ENCODE measurements at regions of chr1 and their contacts with region 1.

Region 1: GRCh38 chr1:112390775-112391602 is 5.0 kb upstream of the CTTNBP2NL start:
- DNase-seq: peak; percentile 89
- H3K4me3 ChIP-seq: peak overlapping the region; percentile 54
- H3K27ac ChIP-seq: no peak overlapping the region
- H3K4me1 ChIP-seq: peaks cover 24% of the 10 kb centered on the region
- CTCF ChIP-seq: peak; percentile 95

Region 2: DNA sequence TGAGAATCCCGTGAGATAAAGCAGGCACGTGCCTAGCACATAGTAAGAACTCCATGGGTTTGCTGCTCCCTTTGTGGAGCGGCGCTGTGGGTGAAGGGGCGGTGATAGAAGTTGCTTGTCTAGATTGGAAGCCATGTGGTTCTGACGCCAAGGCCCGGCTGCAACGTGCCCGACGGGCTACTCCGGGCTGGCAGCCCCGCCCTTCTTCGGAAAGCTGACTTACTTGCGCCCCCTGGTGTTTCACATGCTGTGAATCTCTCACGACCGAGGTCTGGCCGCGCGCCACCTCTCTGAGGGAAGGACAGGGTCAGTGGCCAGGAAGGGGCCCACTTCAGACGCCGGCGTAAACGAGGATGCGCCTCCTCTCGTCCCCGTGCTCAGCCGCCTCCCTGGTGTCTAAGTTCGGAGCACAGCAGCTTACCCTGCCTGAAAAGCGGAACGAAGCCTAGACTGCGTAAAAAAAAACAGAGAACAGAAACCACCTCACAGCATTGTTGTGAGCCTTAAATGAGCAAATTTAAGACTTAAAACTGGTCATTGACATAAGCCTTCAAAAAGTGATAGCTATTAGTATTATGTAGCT is 75.2 kb after region 1 on chr1:
- CTCF ChIA-PET with region 1: interaction called, 6 read pairs
- POLR2A ChIA-PET with region 1: interaction called, 10 read pairs
- intact Hi-C with region 1: loop called (anchors 1 kb)
- DNase-seq: peak; percentile 92
- H3K4me3 ChIP-seq: peak overlapping the region; percentile 41
- H3K27ac ChIP-seq: peak overlapping the region; percentile 64
- H3K4me1 ChIP-seq: peaks cover 43% of the 10 kb centered on the region
- CTCF ChIP-seq: peak; percentile 89

Region 3: GRCh38 chr1:112614460-112615065 is 223.6 kb after region 1 on chr1:
- CTCF ChIA-PET with region 1: no interaction called
- POLR2A ChIA-PET with region 1: interaction called, 11 read pairs
- intact Hi-C with region 1: loop called (anchors 1 kb)
- DNase-seq: peak; percentile 54
- H3K4me3 ChIP-seq: no peak overlapping the region
- H3K27ac ChIP-seq: no peak overlapping the region
- H3K4me1 ChIP-seq: peaks cover 12% of the 10 kb centered on the region
- CTCF ChIP-seq: peak; percentile 84

Region 4: GRCh38 chr1:112706908-112707663 is 316.1 kb after region 1 on chr1 and contains the start of gene RHOC:
- CTCF ChIA-PET with region 1: interaction called, 7 read pairs
- POLR2A ChIA-PET with region 1: interaction called, 4 read pairs
- intact Hi-C with region 1: loop called (anchors 2 kb)
- DNase-seq: peak; percentile 79
- H3K4me3 ChIP-seq: peak within 1 kb of the TSS; percentile 66
- H3K27ac ChIP-seq: no peak within 1 kb of the TSS
- H3K4me1 ChIP-seq: peaks cover 33% of the 10 kb centered on the region
- CTCF ChIP-seq: peak; percentile 86
- total RNA-seq, gene RHOC: 23.1 and 34.9 TPM in 2 replicates

Region 5: DNA sequence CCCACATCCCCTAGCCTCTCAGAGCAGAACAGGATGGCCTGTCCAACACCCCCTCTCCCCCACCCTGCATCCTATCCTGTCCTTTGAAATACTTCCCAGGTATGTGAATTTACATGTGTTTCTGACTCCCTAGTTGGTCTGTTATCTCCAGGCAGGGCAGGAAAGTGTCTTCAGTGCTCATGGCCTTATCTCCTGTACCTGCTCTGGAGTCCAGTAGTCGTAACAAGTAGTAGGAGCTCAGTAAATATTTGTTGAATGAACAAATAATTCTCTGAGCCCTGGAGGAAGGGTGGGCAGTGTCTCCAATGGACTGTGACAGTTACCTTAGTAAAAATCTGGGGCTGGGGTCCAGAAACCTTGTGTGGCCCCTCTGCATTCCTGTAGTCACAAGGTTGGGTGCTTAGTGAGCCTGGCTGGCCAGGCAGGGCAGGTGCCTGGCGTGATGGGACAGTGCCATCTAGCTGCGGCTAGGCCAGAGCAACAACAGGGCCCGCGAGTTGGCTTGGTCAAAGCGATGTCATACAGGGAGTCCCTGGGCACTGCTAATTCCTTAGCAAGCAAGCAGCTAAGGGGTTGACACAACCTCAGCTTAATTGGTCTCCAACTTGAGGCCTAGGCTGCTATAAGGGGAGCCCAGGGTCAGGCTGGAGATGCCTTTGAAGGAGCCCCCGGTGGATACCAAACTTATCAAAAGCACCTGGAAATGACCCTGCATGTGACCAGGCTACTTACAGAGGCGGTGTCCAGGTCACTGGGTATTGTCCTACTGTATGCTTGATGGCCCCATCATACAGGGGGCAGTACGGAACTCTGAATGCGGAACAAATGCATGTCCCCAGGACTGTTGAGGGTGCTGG is 413.1 kb after region 1 on chr1:
- CTCF ChIA-PET with region 1: no interaction called
- POLR2A ChIA-PET with region 1: no interaction called
- intact Hi-C with region 1: loop called (anchors 2 kb)
- DNase-seq: peak; percentile 63
- H3K4me3 ChIP-seq: no peak overlapping the region
- H3K27ac ChIP-seq: no peak overlapping the region
- H3K4me1 ChIP-seq: no peaks in the 10 kb centered on the region
- CTCF ChIP-seq: peak; percentile 82